Naive thymus-derived CD4-positive, alpha-beta T cell (primary cell): ENCODE measurements at regions of chr15 and their contacts with region 1.

Region 1: GRCh38 chr15:39580117-39580484 is 778 bp upstream of the THBS1 start:
- DNase-seq: peak; percentile 23 to 91 (median 63)
- ATAC-seq: peak; percentile 92
- H3K4me3 ChIP-seq: peak overlapping the region; percentile 26
- H3K4me3 Mint-ChIP-seq: peak overlapping the region in 7 of 10 donors; percentile 16 to 82 (median 64)
- H3K27ac ChIP-seq: no peak overlapping the region
- H3K27ac Mint-ChIP-seq: no peak overlapping the region
- H3K4me1 ChIP-seq: peaks cover 0 to 11% of the 10 kb centered on the region in 2 donors
- H3K4me1 Mint-ChIP-seq: peaks cover 0 to 31% (median 14%) of the 10 kb centered on the region in 7 donors
- H3K27me3 ChIP-seq: peaks cover 0 to 5% of the 10 kb centered on the region in 2 donors
- H3K27me3 Mint-ChIP-seq: peaks cover 53 to 74% (median 66%) of the 10 kb centered on the region in 5 donors

Region 2: DNA sequence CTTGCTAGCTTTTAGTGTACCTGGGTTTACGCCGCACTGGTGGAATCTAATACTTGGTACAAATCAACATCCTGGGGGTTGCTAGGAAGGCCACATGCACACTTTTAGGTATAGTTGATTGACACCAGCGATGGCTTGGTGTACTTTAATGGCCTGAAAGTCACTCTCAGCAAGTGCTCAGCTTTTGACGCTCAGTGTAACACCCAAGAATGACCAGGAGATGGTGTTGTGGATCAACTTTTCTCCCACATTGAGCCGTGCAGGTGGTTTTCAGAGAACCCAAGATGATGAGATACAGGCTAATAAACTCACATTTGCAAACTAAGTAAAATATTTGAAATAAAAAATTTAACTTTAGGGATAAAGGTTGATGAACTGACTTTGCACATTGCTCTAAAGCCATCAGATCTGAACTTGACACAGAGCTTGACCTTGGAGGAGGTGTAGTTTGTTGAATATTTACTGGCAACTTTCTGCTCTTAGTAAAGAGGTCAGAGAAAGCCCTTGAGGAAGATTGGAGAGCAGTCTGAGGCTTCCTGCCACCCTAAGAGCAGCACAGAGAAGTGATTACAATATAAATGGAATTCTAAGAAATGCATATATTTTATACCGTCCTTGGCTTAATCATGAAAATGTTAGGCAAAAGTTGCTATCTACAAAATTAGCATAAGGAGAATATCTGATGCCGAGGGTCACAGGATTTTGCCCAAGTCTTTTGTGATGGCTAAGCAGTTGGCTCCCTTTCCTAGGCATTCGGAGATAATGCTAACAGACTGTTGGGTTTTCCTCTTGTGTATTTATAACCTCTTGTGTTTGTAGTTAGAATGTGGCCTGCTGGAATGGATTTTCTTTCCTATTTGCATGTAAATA is 872.1 kb before region 1 on chr15:
- CTCF ChIA-PET with region 1: no interaction called
- POLR2A ChIA-PET with region 1: no interaction called
- intact Hi-C with region 1: loop called (anchors 1 to 5 kb)
- DNase-seq: peak in 5 of 9 donors; percentile 36 to 60 (median 51)
- ATAC-seq: peak; percentile 84
- H3K4me3 ChIP-seq: no peak overlapping the region
- H3K4me3 Mint-ChIP-seq: no peak overlapping the region
- H3K27ac ChIP-seq: no peak overlapping the region
- H3K27ac Mint-ChIP-seq: no peak overlapping the region
- H3K4me1 ChIP-seq: no peaks in the 10 kb centered on the region
- H3K4me1 Mint-ChIP-seq: peaks cover 0 to 25% (median 0%) of the 10 kb centered on the region in 7 donors
- H3K27me3 ChIP-seq: no peaks in the 10 kb centered on the region
- H3K27me3 Mint-ChIP-seq: peaks cover 0 to 23% (median 0%) of the 10 kb centered on the region in 5 donors

Region 3: DNA sequence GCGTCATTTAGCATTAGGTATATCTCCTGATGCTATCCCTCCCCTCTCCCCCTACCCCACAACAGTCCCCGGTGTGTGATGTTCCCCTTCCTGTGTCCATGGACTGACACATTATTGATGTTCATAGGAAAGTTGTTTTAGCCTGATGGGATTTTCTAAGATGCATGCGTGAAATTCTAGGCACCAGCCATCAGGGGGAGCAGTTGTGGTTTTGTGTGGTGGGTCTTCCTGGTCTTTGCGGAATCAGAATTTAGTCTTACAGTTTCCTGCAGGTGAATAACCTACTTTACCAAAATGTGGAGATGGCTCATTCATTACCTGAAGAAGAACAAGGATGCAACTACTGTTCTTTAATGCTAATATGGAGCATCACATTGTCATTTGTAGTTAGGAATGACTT is 454.2 kb before region 1 on chr15:
- CTCF ChIA-PET with region 1: no interaction called
- POLR2A ChIA-PET with region 1: no interaction called
- intact Hi-C with region 1: loop called in 1 of 2 experiments (anchors 1 kb)
- DNase-seq: peak in 6 of 9 donors; percentile 2 to 36 (median 8)
- ATAC-seq: no peak
- H3K4me3 ChIP-seq: no peak overlapping the region
- H3K4me3 Mint-ChIP-seq: no peak overlapping the region
- H3K27ac ChIP-seq: no peak overlapping the region
- H3K27ac Mint-ChIP-seq: no peak overlapping the region
- H3K4me1 ChIP-seq: no peaks in the 10 kb centered on the region
- H3K4me1 Mint-ChIP-seq: peaks cover 0 to 22% (median 0%) of the 10 kb centered on the region in 7 donors
- H3K27me3 ChIP-seq: no peaks in the 10 kb centered on the region
- H3K27me3 Mint-ChIP-seq: peaks cover 4 to 23% (median 19%) of the 10 kb centered on the region in 5 donors

Region 4: DNA sequence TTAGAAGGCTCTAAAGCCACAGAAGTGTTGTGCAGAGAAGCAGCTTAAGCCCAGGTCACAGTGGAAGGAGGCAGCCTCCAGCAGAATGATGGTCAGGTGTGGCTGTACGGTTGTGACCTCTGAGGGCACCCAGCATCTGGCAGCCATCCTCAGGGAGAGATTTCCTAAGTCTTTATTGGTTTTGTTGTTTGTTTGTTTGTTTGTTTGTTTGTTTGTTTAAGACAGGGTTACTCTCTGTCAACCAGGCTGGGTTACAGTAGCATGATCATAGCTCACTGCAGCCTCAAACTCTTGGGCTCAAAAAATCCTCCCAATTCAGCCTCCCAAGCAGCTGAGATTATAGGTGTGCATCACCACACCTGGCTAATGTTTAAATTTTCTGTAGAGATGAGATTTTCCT is 53.9 kb before region 1 on chr15:
- CTCF ChIA-PET with region 1: no interaction called
- POLR2A ChIA-PET with region 1: no interaction called
- intact Hi-C with region 1: no loop called
- DNase-seq: no peak
- ATAC-seq: no peak
- H3K4me3 ChIP-seq: no peak overlapping the region
- H3K4me3 Mint-ChIP-seq: no peak overlapping the region
- H3K27ac ChIP-seq: no peak overlapping the region
- H3K27ac Mint-ChIP-seq: no peak overlapping the region
- H3K4me1 ChIP-seq: no peaks in the 10 kb centered on the region
- H3K4me1 Mint-ChIP-seq: no peaks in the 10 kb centered on the region
- H3K27me3 ChIP-seq: no peaks in the 10 kb centered on the region
- H3K27me3 Mint-ChIP-seq: peaks cover 5 to 35% (median 14%) of the 10 kb centered on the region in 5 donors

Region 5: DNA sequence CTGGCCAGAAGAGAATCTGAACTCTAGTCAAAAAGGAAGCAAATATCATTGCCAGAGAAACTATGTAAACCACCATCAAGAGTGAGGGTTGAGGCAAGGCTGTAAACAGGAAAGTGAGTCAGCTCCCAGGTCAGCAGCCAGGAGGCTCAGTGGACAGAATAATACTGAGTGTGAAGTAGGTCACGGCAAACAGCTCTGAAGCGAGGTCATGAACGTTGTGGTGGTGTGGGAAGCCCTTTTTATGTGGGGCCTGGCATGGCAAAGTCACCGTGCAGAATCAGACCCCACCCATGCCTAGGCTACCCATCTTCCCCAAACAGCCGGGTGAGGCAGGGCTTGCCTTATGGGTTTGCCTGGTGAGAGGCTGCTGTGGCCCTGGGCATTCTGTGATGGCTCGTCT is 44.7 kb after region 1 on chr15:
- CTCF ChIA-PET with region 1: no interaction called
- POLR2A ChIA-PET with region 1: no interaction called
- intact Hi-C with region 1: loop called in 1 of 2 experiments (anchors 2 kb)
- DNase-seq: peak in 1 of 9 donors; percentile 63
- ATAC-seq: peak; percentile 77
- H3K4me3 ChIP-seq: no peak overlapping the region
- H3K4me3 Mint-ChIP-seq: peak overlapping the region in 2 of 10 donors; percentile 70 to 83
- H3K27ac ChIP-seq: no peak overlapping the region
- H3K27ac Mint-ChIP-seq: peak overlapping the region in 6 of 9 donors; percentile 28 to 100 (median 78)
- H3K4me1 ChIP-seq: peaks cover 15 to 80% of the 10 kb centered on the region in 2 donors
- H3K4me1 Mint-ChIP-seq: peaks cover 28 to 84% (median 33%) of the 10 kb centered on the region in 7 donors
- H3K27me3 ChIP-seq: no peaks in the 10 kb centered on the region
- H3K27me3 Mint-ChIP-seq: peaks cover 0 to 3% (median under 1%) of the 10 kb centered on the region in 5 donors